ENCODE measurements at regions of chr20 and their contacts with region 1.

Region 1: GRCh38 chr20:23350196-23350903 is at the start of gene NXT1:
- DNase-seq: peak; percentile 95 to 99
- ATAC-seq: peak; percentile 86 to 93
- H3K4me3 ChIP-seq: peak within 1 kb of the TSS; percentile 81
- H3K27ac ChIP-seq: peak within 1 kb of the TSS; percentile 94 to 95
- H3K4me1 ChIP-seq: peaks cover 21% of the 10 kb centered on the region
- CTCF ChIP-seq: no peak
- EP300 ChIP-seq: no peak; a peak in 1 of 5 replicates
- POLR2A ChIP-seq: peak; percentile 79
- RAD21 ChIP-seq: no peak
- polyA plus RNA-seq, gene NXT1: 68.2 and 71.8 TPM in 2 replicates

Region 2: DNA sequence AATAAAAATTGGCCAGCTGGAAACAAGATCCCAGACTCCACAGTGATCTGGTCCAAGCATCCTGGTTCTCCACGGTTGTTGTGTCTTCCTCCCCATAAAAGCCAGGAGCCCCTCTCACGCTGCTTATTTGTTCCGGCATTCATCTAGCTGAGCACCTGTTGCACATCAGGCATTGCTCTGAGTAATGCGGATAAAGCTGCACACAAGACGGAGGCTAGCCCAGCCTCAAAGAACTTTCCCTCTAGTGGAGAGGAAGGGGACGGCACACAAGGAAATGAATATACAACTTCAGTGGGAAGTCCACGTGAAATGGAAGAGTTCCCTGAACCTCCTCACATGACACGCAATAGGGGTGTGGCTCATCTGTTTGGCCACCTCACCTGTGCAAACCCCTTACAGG is 30.0 kb before region 1 on chr20:
- CTCF ChIA-PET with region 1: interaction called, 11 read pairs
- POLR2A ChIA-PET with region 1: no interaction called
- DNase-seq: peak; percentile 55 to 64
- ATAC-seq: peak; percentile 81 to 93; a peak in 5 of 6 replicates
- H3K4me3 ChIP-seq: no peak overlapping the region
- H3K27ac ChIP-seq: no peak overlapping the region
- H3K4me1 ChIP-seq: no peaks in the 10 kb centered on the region; the same call in 2 of the 3 replicates
- CTCF ChIP-seq: peak; percentile 28; the same call in 2 of the 3 replicates
- EP300 ChIP-seq: no peak
- POLR2A ChIP-seq: no peak
- RAD21 ChIP-seq: peak; percentile 30 to 41; a peak in 3 of 5 replicates

Region 3: DNA sequence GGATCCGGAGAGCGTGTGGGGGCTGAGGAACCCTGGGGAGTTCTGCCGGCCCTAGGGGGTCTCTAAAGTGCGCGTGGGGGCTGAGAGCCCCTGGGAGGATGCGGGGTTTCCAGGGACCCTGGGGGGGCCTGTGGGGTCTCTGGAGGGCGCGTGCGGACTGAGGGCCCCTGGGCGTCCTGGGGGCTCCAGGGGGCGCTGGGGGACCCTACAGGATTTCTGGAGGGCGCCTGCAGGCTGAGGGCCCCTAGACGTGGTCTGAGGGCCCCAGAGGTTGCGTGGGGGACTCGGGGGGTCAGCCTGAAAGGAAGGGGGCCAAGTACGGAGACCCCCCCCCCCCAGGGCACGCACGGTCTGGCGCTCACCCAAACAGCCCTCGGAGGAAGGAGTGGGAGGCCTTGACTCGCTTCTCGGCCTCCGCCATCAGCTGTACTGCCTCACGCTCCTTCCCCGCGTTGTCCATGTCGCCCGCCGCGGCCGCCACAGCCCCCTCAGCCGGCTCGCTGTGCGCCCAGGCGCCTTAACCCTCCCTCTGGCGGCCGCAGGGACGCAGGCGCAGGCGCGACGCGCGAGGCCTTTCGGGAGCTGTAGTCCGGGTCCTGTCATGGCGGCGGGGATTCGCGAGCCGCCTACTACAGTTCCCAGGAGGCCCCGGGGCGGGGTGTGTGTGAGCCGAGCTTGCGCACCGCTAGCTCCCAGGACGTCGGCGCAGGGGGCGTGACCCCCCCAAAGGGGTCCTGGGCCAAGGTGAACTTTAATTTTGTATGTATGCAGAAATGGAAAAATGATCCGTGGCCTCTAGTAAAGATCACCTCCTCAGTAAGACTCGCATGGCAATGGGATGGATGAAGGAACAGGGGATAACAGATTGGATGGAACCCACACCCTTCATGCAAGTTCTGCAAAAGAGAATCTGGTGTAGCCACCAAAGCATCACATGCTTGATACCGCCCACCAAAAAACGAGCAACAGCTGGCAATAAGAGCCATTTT is 70.9 kb after region 1 on chr20 and contains the start of gene NAPB:
- CTCF ChIA-PET with region 1: interaction called, 5 read pairs
- POLR2A ChIA-PET with region 1: interaction called, 13 read pairs
- DNase-seq: peak; percentile 91 to 94
- ATAC-seq: peak; percentile 98 to 100
- H3K4me3 ChIP-seq: peak within 1 kb of the TSS; percentile 84
- H3K27ac ChIP-seq: peak within 1 kb of the TSS; percentile 84 to 93
- H3K4me1 ChIP-seq: peaks cover 10% of the 10 kb centered on the region; the same call in 2 of the 3 replicates
- CTCF ChIP-seq: peak; percentile 9; the same call in 2 of the 3 replicates
- EP300 ChIP-seq: no peak
- POLR2A ChIP-seq: peak; percentile 89
- RAD21 ChIP-seq: no peak
- polyA plus RNA-seq, gene NAPB: 8.2 and 12.7 TPM in 2 replicates

Region 4: GRCh38 chr20:23744817-23745216 is 394.5 kb after region 1 on chr20:
- CTCF ChIA-PET with region 1: no interaction called
- POLR2A ChIA-PET with region 1: no interaction called
- DNase-seq: no peak
- ATAC-seq: no peak
- H3K4me3 ChIP-seq: no peak overlapping the region
- H3K27ac ChIP-seq: no peak overlapping the region
- H3K4me1 ChIP-seq: no peaks in the 10 kb centered on the region
- CTCF ChIP-seq: no peak
- EP300 ChIP-seq: no peak
- POLR2A ChIP-seq: no peak
- RAD21 ChIP-seq: no peak

Measured in A549 (cell line).